Natural killer cell (primary cell): ENCODE measurements at regions of chr1 and their contacts with region 1.

Region 1: DNA sequence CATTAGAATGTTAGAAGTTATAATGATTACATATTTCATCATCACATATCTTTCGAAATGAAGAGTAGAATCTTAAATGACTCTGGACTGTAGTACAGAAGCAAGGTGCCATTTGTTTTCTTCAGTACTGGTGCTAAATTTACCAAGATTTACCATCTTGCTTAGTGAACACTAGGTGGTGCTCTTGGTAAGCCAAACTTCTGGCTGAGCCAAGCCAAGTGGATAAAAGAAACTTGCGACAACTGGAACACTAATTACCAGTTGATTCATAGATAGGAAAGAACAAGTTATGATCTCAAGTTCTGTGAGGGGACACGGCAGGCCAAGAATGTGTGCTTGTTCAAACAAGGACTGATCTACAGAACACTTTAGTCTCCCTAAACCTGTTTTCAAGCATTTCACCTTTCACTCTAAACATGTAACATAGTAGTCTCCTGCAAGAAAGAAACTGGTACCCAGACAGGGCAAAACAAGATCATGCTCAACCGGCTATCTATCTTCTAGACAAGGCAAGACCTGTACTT is 19.8 kb downstream of the SPRTN start:
- DNase-seq: peak in 1 of 2 donors; percentile 75
- ATAC-seq: peak; percentile 84 to 89 (median 84)
- H3K4me3 ChIP-seq: no peak overlapping the region
- H3K4me3 Mint-ChIP-seq: no peak overlapping the region
- H3K27ac ChIP-seq: no peak overlapping the region
- H3K27ac Mint-ChIP-seq: no peak overlapping the region
- H3K4me1 ChIP-seq: no peaks in the 10 kb centered on the region
- H3K4me1 Mint-ChIP-seq: peaks cover 6 to 13% of the 10 kb centered on the region in 2 donors
- H3K27me3 ChIP-seq: no peaks in the 10 kb centered on the region
- H3K27me3 Mint-ChIP-seq: no peaks in the 10 kb centered on the region
- CTCF ChIP-seq: peak; percentile 89

Region 2: DNA sequence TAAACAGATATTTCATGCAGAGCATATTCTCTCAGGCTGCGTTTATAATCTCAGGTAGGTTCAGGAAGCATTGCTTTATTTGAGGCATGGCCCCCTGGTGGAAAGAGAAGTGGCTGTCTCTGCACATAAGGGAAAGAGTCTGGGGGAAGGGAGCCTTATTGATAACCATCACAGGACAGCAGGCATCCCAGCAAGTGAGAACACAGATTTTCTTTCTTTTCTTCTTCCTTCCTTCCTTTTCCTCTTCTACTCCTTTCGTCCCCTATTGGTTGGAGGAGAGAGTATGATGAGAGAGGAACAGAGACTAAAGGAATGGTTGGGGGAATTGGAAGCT is 192.5 kb after region 1 on chr1:
- intact Hi-C with region 1: loop called (anchors 5 kb)
- DNase-seq: peak in 1 of 2 donors; percentile 62
- ATAC-seq: peak in 1 of 3 donors; percentile 46
- H3K4me3 ChIP-seq: no peak overlapping the region
- H3K4me3 Mint-ChIP-seq: no peak overlapping the region
- H3K27ac ChIP-seq: no peak overlapping the region
- H3K27ac Mint-ChIP-seq: peak overlapping the region in 1 of 2 donors; percentile 25
- H3K4me1 ChIP-seq: no peaks in the 10 kb centered on the region
- H3K4me1 Mint-ChIP-seq: peaks cover 21 to 46% of the 10 kb centered on the region in 2 donors
- H3K27me3 ChIP-seq: no peaks in the 10 kb centered on the region
- H3K27me3 Mint-ChIP-seq: no peaks in the 10 kb centered on the region
- CTCF ChIP-seq: peak; percentile 40

Region 3: DNA sequence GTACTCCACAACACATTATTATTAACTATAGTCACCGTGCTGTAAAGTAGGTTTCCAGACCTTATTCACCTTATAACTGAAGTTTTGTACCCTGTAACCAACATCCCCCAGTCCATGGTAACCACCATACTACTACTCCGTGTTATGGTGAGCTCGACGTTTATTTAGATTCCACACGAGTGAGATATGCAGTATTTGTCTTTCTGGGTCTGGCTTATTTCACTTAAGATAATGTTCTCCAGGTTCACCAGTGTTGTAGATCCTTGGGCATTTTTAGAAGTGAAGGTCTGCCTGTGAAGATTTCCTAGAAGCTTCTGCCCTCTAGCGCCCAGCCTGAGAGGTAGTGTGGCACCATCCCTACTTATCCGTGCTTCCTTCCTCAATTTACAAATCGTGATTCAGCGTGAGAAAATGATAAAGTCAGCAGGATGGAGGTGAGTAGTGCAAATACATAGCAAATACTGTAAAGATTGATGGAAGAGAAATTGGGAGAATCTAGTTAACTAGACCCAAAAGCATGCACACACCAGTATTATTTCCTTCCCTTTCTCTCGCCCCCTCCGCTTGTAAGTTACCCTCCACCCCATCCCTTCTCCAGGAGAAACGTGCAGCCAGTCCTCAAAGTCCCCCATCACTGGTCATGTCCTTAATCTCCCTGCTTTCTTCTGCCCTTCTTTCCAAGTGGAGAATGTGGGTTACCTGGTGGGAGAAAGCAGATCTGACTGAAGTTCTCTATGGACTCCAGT is 232.7 kb after region 1 on chr1:
- intact Hi-C with region 1: loop called (anchors 1 kb)
- DNase-seq: peak in 1 of 2 donors; percentile 67
- ATAC-seq: peak; percentile 49 to 70 (median 63)
- H3K4me3 ChIP-seq: no peak overlapping the region
- H3K4me3 Mint-ChIP-seq: no peak overlapping the region
- H3K27ac ChIP-seq: no peak overlapping the region
- H3K27ac Mint-ChIP-seq: no peak overlapping the region
- H3K4me1 ChIP-seq: no peaks in the 10 kb centered on the region
- H3K4me1 Mint-ChIP-seq: peaks cover 7 to 12% of the 10 kb centered on the region in 2 donors
- H3K27me3 ChIP-seq: no peaks in the 10 kb centered on the region
- H3K27me3 Mint-ChIP-seq: peaks cover 0 to 6% of the 10 kb centered on the region in 2 donors
- CTCF ChIP-seq: peak; percentile 46

Region 4: GRCh38 chr1:231603598-231604275 is 245.8 kb after region 1 on chr1:
- intact Hi-C with region 1: loop called (anchors 1 kb)
- DNase-seq: peak in 1 of 2 donors; percentile 77
- ATAC-seq: peak; percentile 61 to 70 (median 68)
- H3K4me3 ChIP-seq: peak overlapping the region; percentile 40
- H3K4me3 Mint-ChIP-seq: peak overlapping the region; percentile 91
- H3K27ac ChIP-seq: no peak overlapping the region
- H3K27ac Mint-ChIP-seq: peak overlapping the region; percentile 27 to 55
- H3K4me1 ChIP-seq: peaks cover 14% of the 10 kb centered on the region
- H3K4me1 Mint-ChIP-seq: peaks cover 28 to 29% of the 10 kb centered on the region in 2 donors
- H3K27me3 ChIP-seq: no peaks in the 10 kb centered on the region
- H3K27me3 Mint-ChIP-seq: no peaks in the 10 kb centered on the region
- CTCF ChIP-seq: peak; percentile 75